ENCODE measurements at regions of chr15 and their contacts with region 1.

Region 1: DNA sequence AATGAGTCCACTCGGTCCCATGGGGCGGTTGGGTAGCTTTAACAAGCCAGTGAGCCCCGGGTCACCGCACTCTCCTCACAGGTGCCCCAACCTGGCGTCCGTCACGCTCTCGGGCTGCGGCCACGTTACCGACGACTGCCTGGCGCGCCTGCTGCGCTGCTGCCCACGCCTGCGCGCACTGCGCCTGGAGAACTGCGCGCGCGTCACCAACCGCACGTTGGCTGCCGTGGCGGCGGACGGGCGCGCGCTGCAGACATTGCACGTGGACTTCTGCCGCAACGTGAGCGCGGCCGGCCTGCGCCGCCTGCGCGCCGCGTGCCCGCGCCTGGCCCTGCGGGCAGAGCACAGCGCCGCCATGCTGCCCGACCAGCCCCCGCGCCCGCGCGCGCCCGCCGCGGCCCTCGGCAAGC is 3.4 kb downstream of the FBXL22 start:
- DNase-seq: peak; percentile 93
- ATAC-seq: peak; percentile 82
- H3K4me3 ChIP-seq: peak overlapping the region; percentile 63
- H3K27ac ChIP-seq: peak overlapping the region; percentile 52
- H3K4me1 ChIP-seq: peaks cover 22% of the 10 kb centered on the region
- H3K27me3 ChIP-seq: no peaks in the 10 kb centered on the region
- CTCF ChIP-seq: peak; percentile 30
- POLR2A ChIP-seq: peak; percentile 41; the same call in 1 of the 2 replicates
- RAD21 ChIP-seq: peak; percentile 21; the same call in 1 of the 2 replicates

Region 2: GRCh38 chr15:63256433-63257274 is 344.0 kb before region 1 on chr15:
- CTCF ChIA-PET with region 1: no interaction called
- POLR2A ChIA-PET with region 1: no interaction called
- dilution Hi-C with region 1: no loop called
- in situ Hi-C with region 1: no loop called
- intact Hi-C with region 1: no loop called
- DNase-seq: peak; percentile 84
- ATAC-seq: peak; percentile 82
- H3K4me3 ChIP-seq: no peak overlapping the region
- H3K27ac ChIP-seq: no peak overlapping the region
- H3K4me1 ChIP-seq: peaks cover 5% of the 10 kb centered on the region
- H3K27me3 ChIP-seq: no peaks in the 10 kb centered on the region
- CTCF ChIP-seq: no peak
- POLR2A ChIP-seq: no peak
- RAD21 ChIP-seq: no peak

Region 3: DNA sequence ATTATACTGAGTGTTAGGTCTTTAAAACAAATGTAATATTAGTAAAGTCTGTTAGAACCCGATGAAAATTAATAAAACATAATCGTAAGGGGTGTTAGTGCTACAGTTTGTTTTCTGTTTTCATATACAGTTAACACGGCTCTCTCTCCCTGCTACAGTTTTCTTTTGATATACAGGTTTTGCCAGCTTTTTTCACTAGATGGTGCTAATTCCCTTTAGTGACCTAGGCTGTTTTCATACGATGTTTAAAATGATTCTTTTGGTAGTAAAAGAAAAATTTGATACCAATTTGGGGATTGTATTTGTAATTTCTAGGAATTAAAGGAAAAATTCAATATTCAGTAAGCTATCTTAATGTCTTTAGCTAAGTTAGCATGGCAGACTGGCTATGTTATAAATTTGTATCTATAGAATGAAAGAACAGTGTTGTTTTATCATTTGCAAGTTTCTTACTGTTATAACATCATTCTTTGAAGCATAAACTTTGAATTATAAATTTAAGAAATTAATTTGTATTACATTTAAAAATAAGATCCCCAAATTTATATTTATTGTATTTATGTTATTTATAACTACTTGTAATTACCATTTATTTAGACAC is 311.7 kb before region 1 on chr15:
- CTCF ChIA-PET with region 1: no interaction called
- POLR2A ChIA-PET with region 1: no interaction called
- dilution Hi-C with region 1: no loop called
- in situ Hi-C with region 1: no loop called
- intact Hi-C with region 1: loop called (anchors 2 kb)
- DNase-seq: peak; percentile 69
- ATAC-seq: peak; percentile 68
- H3K4me3 ChIP-seq: no peak overlapping the region
- H3K27ac ChIP-seq: no peak overlapping the region
- H3K4me1 ChIP-seq: peaks cover 2% of the 10 kb centered on the region; the same call in 1 of the 2 replicates
- H3K27me3 ChIP-seq: no peaks in the 10 kb centered on the region
- CTCF ChIP-seq: peak; percentile 86
- POLR2A ChIP-seq: no peak
- RAD21 ChIP-seq: peak; percentile 88

Region 4: DNA sequence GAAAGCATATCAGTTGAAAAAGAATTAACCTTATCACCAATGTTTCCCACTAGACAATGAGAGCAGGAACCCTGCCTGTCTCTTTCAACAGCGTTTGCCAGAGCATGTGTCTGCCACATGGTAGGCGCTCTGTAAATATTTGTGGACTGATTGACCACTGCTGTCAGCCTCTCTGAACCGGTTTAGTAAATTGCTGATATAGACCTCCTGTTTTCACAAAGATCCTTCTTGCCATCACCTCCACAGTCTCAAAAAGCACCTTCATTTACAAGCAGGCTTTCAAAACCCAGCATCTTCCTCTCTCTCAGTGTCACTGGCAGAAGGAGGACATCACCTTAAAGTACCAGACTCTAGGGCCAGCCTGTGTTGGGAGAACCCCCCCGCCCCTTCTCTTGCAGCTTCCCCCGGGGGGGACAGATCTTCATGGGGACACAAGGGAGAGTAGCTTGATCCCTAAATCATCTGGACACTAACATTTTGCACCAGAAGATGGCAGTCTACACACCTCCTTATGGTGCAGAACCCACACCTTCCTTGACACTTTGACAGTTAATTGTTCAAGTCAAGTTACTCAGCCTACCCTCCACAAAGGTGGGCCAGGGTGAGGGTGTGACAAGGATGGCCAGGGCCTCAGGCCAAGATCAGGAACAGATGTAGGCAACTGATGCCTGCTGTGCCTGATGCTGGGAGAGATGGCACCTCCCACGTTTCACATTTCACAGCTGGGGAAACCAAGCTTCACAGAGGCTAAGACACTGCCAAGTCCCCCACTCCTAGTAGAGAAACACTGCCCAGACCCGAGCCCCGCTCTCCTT is 134.0 kb before region 1 on chr15:
- CTCF ChIA-PET with region 1: interaction called, 4 read pairs
- POLR2A ChIA-PET with region 1: no interaction called
- dilution Hi-C with region 1: no loop called
- in situ Hi-C with region 1: no loop called
- intact Hi-C with region 1: loop called (anchors 2 kb)
- DNase-seq: peak; percentile 70
- ATAC-seq: peak; percentile 78
- H3K4me3 ChIP-seq: no peak overlapping the region
- H3K27ac ChIP-seq: no peak overlapping the region
- H3K4me1 ChIP-seq: peaks cover 16% of the 10 kb centered on the region
- H3K27me3 ChIP-seq: peaks cover 4% of the 10 kb centered on the region
- CTCF ChIP-seq: peak; percentile 69
- POLR2A ChIP-seq: 0 out of 2 replicates have a peak, but pooled peaks have one; percentile 33
- RAD21 ChIP-seq: peak; percentile 81

Region 5: GRCh38 chr15:63553388-63553791 is 47.2 kb before region 1 on chr15:
- CTCF ChIA-PET with region 1: no interaction called
- POLR2A ChIA-PET with region 1: no interaction called
- dilution Hi-C with region 1: no loop called
- in situ Hi-C with region 1: no loop called
- intact Hi-C with region 1: loop called (anchors 1 kb)
- DNase-seq: peak; percentile 97
- ATAC-seq: peak; percentile 86
- H3K4me3 ChIP-seq: peak overlapping the region; percentile 18; the same call in 1 of the 2 replicates
- H3K27ac ChIP-seq: peak overlapping the region; percentile 65; the same call in 1 of the 2 replicates
- H3K4me1 ChIP-seq: no peaks in the 10 kb centered on the region
- H3K27me3 ChIP-seq: no peaks in the 10 kb centered on the region
- CTCF ChIP-seq: no peak
- POLR2A ChIP-seq: no peak
- RAD21 ChIP-seq: peak; percentile 5; the same call in 1 of the 2 replicates

Measured in IMR-90 (cell line).